ENCODE measurements at regions of chr6 and their contacts with region 1.

Region 1: GRCh38 chr6:116371120-116371917 is 572 bp downstream of the DSE start:
- H3K4me3 Mint-ChIP-seq: peak overlapping the region; percentile 87
- H3K27ac Mint-ChIP-seq: peak overlapping the region; percentile 94
- H3K4me1 Mint-ChIP-seq: peaks cover 49% of the 10 kb centered on the region
- H3K27me3 Mint-ChIP-seq: no peaks in the 10 kb centered on the region

Region 2: GRCh38 chr6:116287689-116288282 is 83.5 kb before region 1 on chr6:
- intact Hi-C with region 1: loop called (anchors 5 kb)
- H3K4me3 Mint-ChIP-seq: no peak overlapping the region
- H3K27ac Mint-ChIP-seq: no peak overlapping the region
- H3K4me1 Mint-ChIP-seq: no peaks in the 10 kb centered on the region
- H3K27me3 Mint-ChIP-seq: no peaks in the 10 kb centered on the region

Measured in dendritic cell treated with granulocyte-macrophage colony-stimulating factor and Interleukin-4, amounts not matched to agents 40 ng/mL and 50 ng/mL, for 4 days (primary cell).